Heart right ventricle (tissue), 16 donors: ENCODE measurements at regions of chr17 and their contacts with region 1.

Region 1: GRCh38 chr17:40303009-40303657 is 5.8 kb upstream of the RARA start:
- DNase-seq: peak in 1 of 2 donors; percentile 71
- ATAC-seq: peak in 7 of 8 donors; percentile 51 to 72 (median 65)
- H3K4me3 ChIP-seq: no peak overlapping the region
- H3K27ac ChIP-seq: peak overlapping the region in 6 of 10 donors; percentile 14 to 76 (median 22)
- H3K4me1 ChIP-seq: peaks cover 5 to 70% (median 51%) of the 10 kb centered on the region in 9 donors
- H3K27me3 ChIP-seq: no peaks in the 10 kb centered on the region
- CTCF ChIP-seq: peak; percentile 43 to 89 (median 81)

Region 2: DNA sequence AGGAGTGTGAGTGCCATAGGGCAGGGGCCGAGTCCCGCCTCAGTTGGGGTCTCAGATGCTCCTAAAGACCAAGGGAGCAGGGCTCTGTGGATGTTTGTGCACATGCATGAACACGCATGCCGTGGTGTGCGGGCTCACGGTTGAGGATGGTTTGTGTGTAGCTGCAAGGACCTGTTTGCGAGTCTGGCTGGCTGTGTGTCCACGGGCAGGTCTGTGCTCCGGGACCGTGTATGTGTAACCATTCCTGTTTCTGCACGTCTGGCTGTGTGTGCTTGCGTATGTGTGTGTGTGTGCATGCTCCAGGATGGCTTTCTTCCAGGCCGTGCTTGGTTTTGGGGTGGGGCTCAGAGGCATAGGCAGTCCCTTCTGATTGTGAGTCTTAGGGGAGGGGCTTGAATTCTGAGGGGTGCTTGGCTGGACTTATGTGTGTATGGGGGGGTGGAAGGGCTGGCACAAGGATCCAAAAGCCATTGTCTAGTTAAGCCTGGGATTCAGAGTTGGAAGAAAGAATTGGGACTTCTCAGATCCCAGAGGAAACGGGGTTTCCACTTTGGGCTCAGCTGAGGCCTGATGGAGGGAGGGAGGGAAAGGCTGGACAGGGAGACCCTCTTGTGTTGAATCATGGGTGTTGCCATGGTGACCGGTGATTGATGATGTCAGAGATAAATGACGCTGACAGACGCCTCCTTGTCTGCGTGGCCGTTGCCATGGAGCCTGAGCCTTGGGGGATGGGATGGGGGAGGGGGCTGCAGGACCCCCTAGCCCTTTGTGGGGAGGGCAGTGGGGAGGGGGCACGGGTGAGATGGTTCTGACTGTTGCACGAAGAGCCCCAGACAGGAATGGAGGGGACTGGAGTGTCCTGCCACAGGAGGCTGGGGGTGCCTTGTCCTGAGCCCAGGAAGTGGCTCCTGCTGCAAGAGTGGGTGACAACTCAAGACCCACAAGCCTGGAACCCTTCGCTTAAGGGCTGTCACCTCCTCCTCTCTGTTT is 47.1 kb after region 1 on chr17:
- intact Hi-C with region 1: loop called (anchors 1 to 2 kb)
- DNase-seq: peak in 1 of 2 donors; percentile 70
- ATAC-seq: peak in 1 of 8 donors; percentile 6
- H3K4me3 ChIP-seq: peak overlapping the region in 4 of 10 donors; percentile 3 to 25 (median 14)
- H3K27ac ChIP-seq: peak overlapping the region in 6 of 10 donors; percentile 65 to 99 (median 98)
- H3K4me1 ChIP-seq: peaks cover 42 to 92% (median 74%) of the 10 kb centered on the region in 9 donors
- H3K27me3 ChIP-seq: no peaks in the 10 kb centered on the region
- CTCF ChIP-seq: no peak

Region 3: GRCh38 chr17:40355123-40355803 is 52.1 kb after region 1 on chr17:
- intact Hi-C with region 1: loop called (anchors 1 to 2 kb)
- DNase-seq: peak; percentile 75 to 87
- ATAC-seq: peak; percentile 65 to 76 (median 70)
- H3K4me3 ChIP-seq: no peak overlapping the region
- H3K27ac ChIP-seq: peak overlapping the region in 8 of 10 donors; percentile 13 to 62 (median 40)
- H3K4me1 ChIP-seq: peaks cover 8 to 72% (median 48%) of the 10 kb centered on the region in 9 donors
- H3K27me3 ChIP-seq: no peaks in the 10 kb centered on the region
- CTCF ChIP-seq: peak; percentile 95 to 99 (median 97)

Region 4: GRCh38 chr17:40417609-40418427 is 114.7 kb after region 1 on chr17 and contains the start of gene TOP2A:
- intact Hi-C with region 1: loop called in 7 of 10 experiments (anchors 5 to 10 kb)
- DNase-seq: peak; percentile 81 to 100
- ATAC-seq: peak; percentile 98 to 100 (median 100)
- H3K4me3 ChIP-seq: peak within 1 kb of the TSS; percentile 35 to 86 (median 60)
- H3K27ac ChIP-seq: peak within 1 kb of the TSS in 6 of 10 donors; percentile 29 to 76 (median 50)
- H3K4me1 ChIP-seq: peaks cover 8 to 48% (median 14%) of the 10 kb centered on the region in 9 donors
- H3K27me3 ChIP-seq: peaks cover 0 to 9% (median 0%) of the 10 kb centered on the region in 7 donors
- CTCF ChIP-seq: no peak
- total RNA-seq, gene TOP2A: 0.17 to 20.0 (median 1.0) TPM

Region 5: GRCh38 chr17:40536295-40537171 is 233.4 kb after region 1 on chr17:
- intact Hi-C with region 1: loop called in 5 of 10 experiments (anchors 5 to 10 kb)
- DNase-seq: peak; percentile 70 to 80
- ATAC-seq: peak; percentile 40 to 81 (median 62)
- H3K4me3 ChIP-seq: no peak overlapping the region
- H3K27ac ChIP-seq: peak overlapping the region; percentile 5 to 97 (median 89)
- H3K4me1 ChIP-seq: peaks cover 37 to 96% (median 82%) of the 10 kb centered on the region in 9 donors
- H3K27me3 ChIP-seq: no peaks in the 10 kb centered on the region
- CTCF ChIP-seq: no peak

Region 6: GRCh38 chr17:40551879-40552768 is 249.0 kb after region 1 on chr17:
- intact Hi-C with region 1: loop called in 3 of 10 experiments (anchors 5 to 10 kb)
- DNase-seq: no peak
- ATAC-seq: peak in 2 of 8 donors; percentile 13 to 14
- H3K4me3 ChIP-seq: no peak overlapping the region
- H3K27ac ChIP-seq: peak overlapping the region; percentile 37 to 94 (median 88)
- H3K4me1 ChIP-seq: peaks cover 31 to 96% (median 81%) of the 10 kb centered on the region in 9 donors
- H3K27me3 ChIP-seq: no peaks in the 10 kb centered on the region
- CTCF ChIP-seq: no peak